CD4-positive, alpha-beta memory T cell (primary cell): ENCODE measurements at regions of chr5 and their contacts with region 1.

Region 1: GRCh38 chr5:66306105-66306843 is 162.2 kb downstream of the SREK1 start:
- DNase-seq: peak in 4 of 5 donors; percentile 17 to 24 (median 19)
- H3K4me3 ChIP-seq: no peak overlapping the region
- H3K4me3 Mint-ChIP-seq: no peak overlapping the region
- H3K27ac ChIP-seq: no peak overlapping the region
- H3K27ac Mint-ChIP-seq: peak overlapping the region in 2 of 7 donors; percentile 16 to 35
- H3K4me1 ChIP-seq: no peaks in the 10 kb centered on the region
- H3K4me1 Mint-ChIP-seq: peaks cover 3 to 9% (median 4%) of the 10 kb centered on the region in 4 donors
- H3K27me3 ChIP-seq: no peaks in the 10 kb centered on the region
- H3K27me3 Mint-ChIP-seq: peaks cover 10 to 15% of the 10 kb centered on the region in 2 donors

Region 2: DNA sequence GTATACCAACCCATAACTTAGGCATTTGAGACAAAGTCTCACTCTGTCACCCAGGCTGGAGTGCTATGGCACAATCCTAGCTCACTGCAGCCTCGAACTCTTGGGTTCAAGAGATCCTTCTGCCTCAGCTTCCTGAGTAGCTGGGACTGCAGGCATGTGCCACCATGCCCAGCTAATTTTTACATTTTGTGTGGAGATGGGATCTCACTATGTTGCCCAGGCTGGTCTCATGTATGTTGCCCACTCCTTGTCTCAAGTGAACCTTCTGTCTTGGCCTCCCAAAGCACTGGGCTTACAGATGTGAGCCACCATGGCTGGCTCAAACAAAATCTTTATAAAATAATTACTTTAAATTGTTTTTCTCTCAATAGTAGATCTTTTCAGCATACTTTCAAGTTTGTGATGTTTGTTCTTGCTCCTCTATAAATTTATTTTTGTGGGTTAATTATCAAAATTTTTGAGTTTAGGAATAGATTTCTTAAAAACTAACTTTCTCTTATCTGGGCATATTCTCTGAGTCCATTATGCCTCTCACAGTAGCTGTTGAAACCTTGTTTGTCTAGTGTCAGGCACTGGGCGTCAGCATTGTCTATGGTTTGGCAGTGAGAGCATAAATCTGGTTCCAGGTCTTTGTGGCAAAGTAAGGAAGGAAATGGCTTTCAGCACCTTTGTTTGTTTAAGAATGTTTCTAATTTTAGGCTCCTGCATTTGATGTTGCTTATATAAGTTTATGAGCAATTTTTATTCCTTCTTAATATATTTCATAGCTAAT is 545.6 kb before region 1 on chr5:
- CTCF ChIA-PET with region 1: interaction called, 23 read pairs
- POLR2A ChIA-PET with region 1: no interaction called
- intact Hi-C with region 1: loop called (anchors 1 kb)
- DNase-seq: peak; percentile 63 to 74 (median 68)
- H3K4me3 ChIP-seq: no peak overlapping the region
- H3K4me3 Mint-ChIP-seq: no peak overlapping the region
- H3K27ac ChIP-seq: no peak overlapping the region
- H3K27ac Mint-ChIP-seq: peak overlapping the region in 3 of 7 donors; percentile 1 to 53 (median 24)
- H3K4me1 ChIP-seq: peaks cover 5% of the 10 kb centered on the region
- H3K4me1 Mint-ChIP-seq: peaks cover 3 to 12% (median 6%) of the 10 kb centered on the region in 4 donors
- H3K27me3 ChIP-seq: no peaks in the 10 kb centered on the region
- H3K27me3 Mint-ChIP-seq: no peaks in the 10 kb centered on the region

Region 3: GRCh38 chr5:66171349-66172344 is 134.6 kb before region 1 on chr5:
- CTCF ChIA-PET with region 1: interaction called, 6 read pairs
- POLR2A ChIA-PET with region 1: no interaction called
- intact Hi-C with region 1: loop called (anchors 2 kb)
- DNase-seq: peak; percentile 68 to 81 (median 78)
- H3K4me3 ChIP-seq: no peak overlapping the region
- H3K4me3 Mint-ChIP-seq: peak overlapping the region in 3 of 8 donors; percentile 18 to 53 (median 26)
- H3K27ac ChIP-seq: peak overlapping the region; percentile 43
- H3K27ac Mint-ChIP-seq: peak overlapping the region; percentile 86 to 96 (median 90)
- H3K4me1 ChIP-seq: peaks cover 14% of the 10 kb centered on the region
- H3K4me1 Mint-ChIP-seq: peaks cover 18 to 33% (median 20%) of the 10 kb centered on the region in 4 donors
- H3K27me3 ChIP-seq: no peaks in the 10 kb centered on the region
- H3K27me3 Mint-ChIP-seq: no peaks in the 10 kb centered on the region

Region 4: DNA sequence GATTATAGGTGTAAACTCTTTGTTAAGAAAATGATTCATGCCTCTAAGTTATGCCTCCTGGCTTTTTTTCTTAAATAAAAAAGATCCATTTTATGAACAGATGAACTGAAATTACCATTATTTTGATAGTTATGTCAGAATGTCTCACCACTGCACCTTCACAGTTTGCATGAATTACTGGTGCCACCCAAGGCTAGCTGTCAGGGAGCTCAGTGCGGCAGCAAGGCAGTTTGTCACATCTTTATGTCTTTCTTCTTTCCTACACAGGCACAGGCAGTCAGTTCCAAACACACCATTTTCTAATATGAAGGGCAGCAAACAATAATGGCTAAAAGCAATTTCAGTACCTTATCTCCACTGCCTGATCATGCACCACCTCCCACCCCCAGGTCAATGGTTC is 14.5 kb before region 1 on chr5:
- CTCF ChIA-PET with region 1: interaction called, 30 read pairs
- POLR2A ChIA-PET with region 1: no interaction called
- intact Hi-C with region 1: no loop called
- DNase-seq: no peak
- H3K4me3 ChIP-seq: no peak overlapping the region
- H3K4me3 Mint-ChIP-seq: no peak overlapping the region
- H3K27ac ChIP-seq: no peak overlapping the region
- H3K27ac Mint-ChIP-seq: no peak overlapping the region
- H3K4me1 ChIP-seq: no peaks in the 10 kb centered on the region
- H3K4me1 Mint-ChIP-seq: no peaks in the 10 kb centered on the region
- H3K27me3 ChIP-seq: no peaks in the 10 kb centered on the region
- H3K27me3 Mint-ChIP-seq: peaks cover 0 to 11% of the 10 kb centered on the region in 2 donors

Region 5: DNA sequence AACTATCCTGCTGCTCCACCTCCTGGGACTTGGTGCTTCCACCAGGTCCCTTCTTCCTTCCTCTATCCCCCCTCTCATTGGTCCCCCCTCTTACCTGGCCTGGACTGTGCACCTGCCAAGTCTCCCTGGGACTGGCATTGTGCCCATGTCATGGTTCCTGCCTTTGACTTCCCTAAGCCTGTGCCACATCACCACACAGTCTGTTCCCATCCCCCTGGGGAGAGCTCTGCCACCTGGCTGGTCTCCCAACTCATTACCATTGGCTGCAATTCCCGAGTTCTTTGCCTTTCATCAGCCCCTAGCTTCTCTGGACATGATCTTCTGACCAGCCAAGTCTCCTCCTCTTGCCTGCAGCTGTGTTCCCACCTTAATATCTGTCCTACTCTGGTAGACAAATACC is 18.1 kb after region 1 on chr5:
- CTCF ChIA-PET with region 1: interaction called, 37 read pairs
- POLR2A ChIA-PET with region 1: no interaction called
- intact Hi-C with region 1: no loop called
- DNase-seq: no peak
- H3K4me3 ChIP-seq: no peak overlapping the region
- H3K4me3 Mint-ChIP-seq: no peak overlapping the region
- H3K27ac ChIP-seq: no peak overlapping the region
- H3K27ac Mint-ChIP-seq: no peak overlapping the region
- H3K4me1 ChIP-seq: no peaks in the 10 kb centered on the region
- H3K4me1 Mint-ChIP-seq: no peaks in the 10 kb centered on the region
- H3K27me3 ChIP-seq: no peaks in the 10 kb centered on the region
- H3K27me3 Mint-ChIP-seq: peaks cover 2 to 14% of the 10 kb centered on the region in 2 donors